Adrenal gland (tissue), 19 donors: ENCODE measurements at regions of chr18 and their contacts with region 1.

Region 1: GRCh38 chr18:48419277-48420022 is 10.3 kb upstream of the ZBTB7C start:
- DNase-seq: no peak
- H3K4me3 ChIP-seq: no peak overlapping the region
- H3K27ac ChIP-seq: no peak overlapping the region
- H3K4me1 ChIP-seq: no peaks in the 10 kb centered on the region
- H3K27me3 ChIP-seq: no peaks in the 10 kb centered on the region
- CTCF ChIP-seq: no peak
- POLR2A ChIP-seq: no peak

Region 2: DNA sequence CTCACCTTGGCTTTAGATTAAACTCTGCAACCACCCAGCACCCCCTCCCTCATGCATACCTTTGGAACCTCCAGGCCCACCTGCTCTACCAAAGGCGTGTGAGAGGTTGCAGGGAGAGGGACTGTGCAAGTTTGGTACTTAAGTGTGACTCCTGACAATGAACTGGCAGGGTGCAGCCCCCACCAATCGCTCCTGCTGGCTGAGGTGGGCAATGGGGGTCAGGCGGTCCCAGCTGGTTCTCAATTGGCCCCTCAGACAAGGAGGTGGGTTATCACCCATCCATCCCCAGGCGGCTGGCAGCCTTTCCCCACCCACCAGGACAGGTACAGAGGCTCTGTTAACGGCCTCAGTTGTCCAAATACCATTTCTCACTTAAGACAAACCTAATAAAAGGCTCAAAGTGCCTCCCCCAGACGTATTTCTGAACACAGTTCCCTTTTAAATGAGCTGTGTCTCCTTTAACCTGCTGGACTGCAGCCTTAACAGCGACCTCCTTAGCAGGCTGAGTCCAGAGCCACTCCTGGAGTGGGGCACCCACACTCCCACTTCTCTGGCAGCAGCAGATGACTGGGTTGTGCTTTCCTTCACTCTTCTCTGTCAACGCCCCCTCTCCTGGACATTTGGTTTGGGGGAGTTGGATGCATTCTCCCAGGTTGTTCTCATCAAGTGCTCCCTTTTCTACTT is 319.8 kb before region 1 on chr18:
- intact Hi-C with region 1: loop called in 1 of 2 experiments (anchors 10 kb)
- DNase-seq: no peak
- H3K4me3 ChIP-seq: no peak overlapping the region
- H3K27ac ChIP-seq: no peak overlapping the region
- H3K4me1 ChIP-seq: no peaks in the 10 kb centered on the region
- H3K27me3 ChIP-seq: no peaks in the 10 kb centered on the region
- CTCF ChIP-seq: no peak
- POLR2A ChIP-seq: no peak